Natural killer cell (primary cell): ENCODE measurements at regions of chrX and their contacts with region 1.

Region 1: DNA sequence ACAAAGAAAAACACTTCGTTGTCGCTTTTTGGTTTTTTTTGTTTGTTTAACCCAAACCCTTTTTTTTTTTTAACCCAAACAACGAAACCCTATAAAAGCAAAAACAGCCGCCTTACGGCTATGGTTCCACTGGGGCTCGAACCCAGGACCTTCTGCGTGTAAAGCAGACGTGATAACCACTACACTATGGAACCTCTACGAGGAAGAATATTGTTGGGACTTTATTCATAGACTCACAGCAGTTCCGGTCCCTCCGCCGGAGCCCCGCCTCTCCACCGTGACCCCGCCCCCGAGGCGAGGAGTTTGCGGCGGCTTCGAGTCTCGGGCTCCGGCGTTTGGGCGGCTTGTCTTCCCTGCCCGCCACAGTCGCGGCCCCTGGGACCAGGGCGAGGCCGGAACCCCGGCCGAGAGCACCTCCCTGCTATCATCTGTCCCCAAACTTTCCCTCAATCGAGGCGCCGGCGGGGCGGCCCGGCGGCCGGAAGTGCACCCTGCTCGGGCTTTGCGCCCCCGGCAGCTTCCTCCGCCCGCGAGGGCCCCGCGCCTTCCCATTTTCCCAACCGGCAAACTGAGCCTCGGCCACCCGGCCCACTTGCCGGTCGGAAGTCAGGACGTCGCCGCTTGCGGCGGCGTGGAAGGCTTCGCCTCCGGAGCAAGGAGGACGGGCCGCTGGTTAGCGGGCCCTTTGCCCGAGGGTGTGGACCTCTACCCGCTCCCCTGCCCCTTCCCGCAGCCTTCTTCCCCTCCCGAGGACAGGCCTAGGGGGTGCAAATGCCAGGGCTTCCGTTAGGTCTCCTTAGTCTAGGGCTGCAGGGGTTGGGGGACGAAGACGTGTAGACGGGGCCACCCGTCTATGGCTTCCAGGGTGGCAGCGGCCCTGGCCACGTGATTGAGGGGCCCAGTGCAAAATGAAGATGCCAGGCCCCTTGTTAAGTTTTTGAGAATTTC is 3.2 kb upstream of the RS1 start:
- DNase-seq: peak; percentile 77 to 90
- ATAC-seq: peak; percentile 90 to 95 (median 94)
- H3K4me3 ChIP-seq: peak overlapping the region; percentile 76
- H3K4me3 Mint-ChIP-seq: peak overlapping the region; percentile 91
- H3K27ac ChIP-seq: peak overlapping the region; percentile 72
- H3K27ac Mint-ChIP-seq: peak overlapping the region; percentile 87 to 88
- H3K4me1 ChIP-seq: peaks cover 20% of the 10 kb centered on the region
- H3K4me1 Mint-ChIP-seq: peaks cover 4 to 26% of the 10 kb centered on the region in 2 donors
- H3K27me3 ChIP-seq: no peaks in the 10 kb centered on the region
- H3K27me3 Mint-ChIP-seq: no peaks in the 10 kb centered on the region
- CTCF ChIP-seq: no peak

Region 2: GRCh38 chrX:18425199-18426003 is 249.7 kb before region 1 on chrX and contains the start of gene CDKL5:
- intact Hi-C with region 1: loop called (anchors 10 kb)
- DNase-seq: peak; percentile 93 to 96
- ATAC-seq: peak; percentile 92 to 99 (median 94)
- H3K4me3 ChIP-seq: peak within 1 kb of the TSS; percentile 97
- H3K4me3 Mint-ChIP-seq: peak within 1 kb of the TSS; percentile 94
- H3K27ac ChIP-seq: peak within 1 kb of the TSS; percentile 94
- H3K27ac Mint-ChIP-seq: peak within 1 kb of the TSS; percentile 76 to 96
- H3K4me1 ChIP-seq: no peaks in the 10 kb centered on the region
- H3K4me1 Mint-ChIP-seq: peaks cover 16% of the 10 kb centered on the region in 2 donors
- H3K27me3 ChIP-seq: no peaks in the 10 kb centered on the region
- H3K27me3 Mint-ChIP-seq: peaks cover 3 to 38% of the 10 kb centered on the region in 2 donors
- CTCF ChIP-seq: no peak
- total RNA-seq, gene CDKL5: 3.4 to 4.3 (median 3.5) TPM

Region 3: GRCh38 chrX:18886344-18887161 is 211.5 kb after region 1 on chrX:
- intact Hi-C with region 1: loop called (anchors 5 kb)
- DNase-seq: peak; percentile 35 to 66
- ATAC-seq: peak; percentile 71 to 79 (median 72)
- H3K4me3 ChIP-seq: peak overlapping the region; percentile 61
- H3K4me3 Mint-ChIP-seq: peak overlapping the region; percentile 95
- H3K27ac ChIP-seq: peak overlapping the region; percentile 82
- H3K27ac Mint-ChIP-seq: peak overlapping the region; percentile 90 to 97
- H3K4me1 ChIP-seq: peaks cover 29% of the 10 kb centered on the region
- H3K4me1 Mint-ChIP-seq: peaks cover 27 to 33% of the 10 kb centered on the region in 2 donors
- H3K27me3 ChIP-seq: no peaks in the 10 kb centered on the region
- H3K27me3 Mint-ChIP-seq: no peaks in the 10 kb centered on the region
- CTCF ChIP-seq: peak; percentile 30

Region 4: GRCh38 chrX:19343535-19344408 is 668.7 kb after region 1 on chrX and contains the start of gene PDHA1:
- intact Hi-C with region 1: loop called (anchors 10 kb)
- DNase-seq: peak; percentile 84 to 95
- ATAC-seq: peak; percentile 95 to 99 (median 96)
- H3K4me3 ChIP-seq: peak within 1 kb of the TSS; percentile 74
- H3K4me3 Mint-ChIP-seq: peak within 1 kb of the TSS; percentile 92
- H3K27ac ChIP-seq: peak within 1 kb of the TSS; percentile 80
- H3K27ac Mint-ChIP-seq: peak within 1 kb of the TSS; percentile 80 to 93
- H3K4me1 ChIP-seq: peaks cover 20% of the 10 kb centered on the region
- H3K4me1 Mint-ChIP-seq: peaks cover 6 to 20% of the 10 kb centered on the region in 2 donors
- H3K27me3 ChIP-seq: no peaks in the 10 kb centered on the region
- H3K27me3 Mint-ChIP-seq: peaks cover 0 to 13% of the 10 kb centered on the region in 2 donors
- CTCF ChIP-seq: no peak
- total RNA-seq, gene PDHA1: 131 to 164 (median 154) TPM